ENCODE measurements at regions of chr9 and their contacts with region 1.

Region 1: DNA sequence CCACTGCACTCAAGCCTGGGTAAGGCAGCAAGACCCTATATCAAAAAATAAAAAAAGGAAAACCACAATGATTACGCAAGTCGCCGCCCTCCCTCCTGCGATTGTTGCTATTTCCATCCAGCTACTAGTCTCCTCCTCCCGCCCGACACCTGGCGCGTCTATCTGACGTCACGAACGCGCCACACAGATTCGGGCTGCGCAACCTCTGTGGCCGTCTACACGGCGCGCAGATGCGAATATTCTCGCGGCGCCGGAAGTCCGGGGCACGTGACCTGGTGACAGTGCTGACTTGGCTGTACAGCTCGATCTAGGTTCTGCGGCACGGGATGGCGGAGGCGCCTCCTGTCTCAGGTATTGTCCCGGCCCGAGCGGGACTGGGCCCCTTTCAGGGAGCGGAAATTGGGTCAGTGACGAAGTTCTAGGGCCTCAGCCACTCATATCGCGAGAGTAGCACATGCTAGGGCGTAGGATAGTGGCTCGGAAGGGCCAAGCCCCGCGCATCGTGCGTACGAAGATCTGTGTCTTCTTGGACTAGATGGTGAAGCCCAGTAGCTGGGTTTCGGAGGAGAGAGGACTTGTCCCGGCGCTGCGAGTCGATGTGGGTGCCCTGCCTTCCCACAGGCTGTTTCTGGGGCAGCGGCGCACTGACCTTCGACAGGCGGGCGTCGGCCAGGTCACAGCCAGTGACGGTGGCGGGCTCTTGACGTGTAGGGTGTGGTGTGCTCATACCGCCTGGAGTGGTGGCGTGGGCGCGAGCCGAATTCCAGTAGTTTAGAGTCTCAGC is at the start of gene NFX1:
- DNase-seq: peak; percentile 99
- H3K4me3 ChIP-seq: peak within 1 kb of the TSS; percentile 57 to 79 (median 78)
- H3K27ac ChIP-seq: peak within 1 kb of the TSS; percentile 92
- H3K4me1 ChIP-seq: peaks cover 13% of the 10 kb centered on the region
- H3K27me3 ChIP-seq: no peaks in the 10 kb centered on the region
- CTCF ChIP-seq: no peak
- POLR2A ChIP-seq: peak; percentile 95
- total RNA-seq, gene NFX1: 21.7 and 22.1 TPM in 2 replicates

Region 2: DNA sequence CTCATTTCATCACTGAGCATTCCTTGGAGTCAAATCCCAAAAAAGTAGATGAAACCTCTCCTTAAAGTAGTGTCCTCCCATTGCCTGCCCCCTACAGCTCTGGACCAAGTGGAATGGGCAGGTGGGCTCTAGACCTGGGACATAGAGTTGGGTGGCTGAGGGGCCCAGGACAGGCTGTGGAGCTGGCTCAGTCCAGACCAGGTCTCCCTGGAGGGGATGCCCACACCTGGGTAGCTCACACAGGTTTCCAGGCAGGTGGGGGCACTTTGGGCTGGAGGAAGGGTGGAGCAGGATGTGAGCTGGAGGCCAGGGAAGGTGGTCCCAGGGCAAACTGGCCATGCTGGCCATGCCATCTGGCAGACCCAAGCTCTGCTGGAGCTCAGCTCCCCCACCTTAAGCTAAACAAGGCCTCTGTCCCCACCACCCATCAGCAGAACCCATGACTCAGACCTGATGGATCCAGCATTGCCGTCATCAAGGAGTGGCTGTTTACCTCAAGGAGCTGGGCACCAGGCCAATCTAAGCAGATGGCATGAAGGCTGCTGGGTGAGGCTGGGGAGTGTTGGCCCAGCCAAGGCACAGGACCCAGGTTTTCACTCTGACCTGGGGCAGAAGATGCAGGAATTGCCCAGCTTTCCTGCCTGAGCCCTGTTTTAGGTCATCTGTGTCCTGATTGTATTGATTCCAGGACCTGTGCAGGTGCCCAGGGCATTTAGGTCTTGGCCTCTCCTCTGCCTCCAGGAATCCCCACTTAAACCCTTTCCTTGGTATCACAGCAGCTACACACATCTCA is 56.6 kb before region 1 on chr9:
- CTCF ChIA-PET with region 1: no interaction called
- POLR2A ChIA-PET with region 1: no interaction called
- dilution Hi-C with region 1: no loop called
- intact Hi-C with region 1: no loop called
- DNase-seq: peak; percentile 56
- H3K4me3 ChIP-seq: no peak overlapping the region
- H3K27ac ChIP-seq: no peak overlapping the region
- H3K4me1 ChIP-seq: no peaks in the 10 kb centered on the region
- H3K27me3 ChIP-seq: peaks cover 0 to 16% of the 10 kb centered on the region in 2 experiments
- CTCF ChIP-seq: no peak
- POLR2A ChIP-seq: no peak

Region 3: GRCh38 chr9:33264473-33265177 is 25.8 kb before region 1 on chr9 and contains the starts of genes BAG1 and CHMP5:
- CTCF ChIA-PET with region 1: no interaction called
- POLR2A ChIA-PET with region 1: interaction called, 5 read pairs
- dilution Hi-C with region 1: no loop called
- intact Hi-C with region 1: loop called (anchors 1 kb)
- DNase-seq: peak; percentile 100
- H3K4me3 ChIP-seq: peak within 1 kb of the TSS; percentile 37 to 96 (median 75)
- H3K27ac ChIP-seq: peak within 1 kb of the TSS; percentile 34
- H3K4me1 ChIP-seq: peaks cover 15% of the 10 kb centered on the region
- H3K27me3 ChIP-seq: no peaks in the 10 kb centered on the region
- CTCF ChIP-seq: peak; percentile 9 to 37
- POLR2A ChIP-seq: peak; percentile 85
- total RNA-seq, gene BAG1: 87.4 and 98.7 TPM in 2 replicates
- total RNA-seq, gene CHMP5: 54.5 and 55.8 TPM in 2 replicates

Region 4: GRCh38 chr9:33350310-33350709 is 59.9 kb after region 1 on chr9:
- CTCF ChIA-PET with region 1: interaction called, 5 read pairs
- POLR2A ChIA-PET with region 1: no interaction called
- dilution Hi-C with region 1: no loop called
- intact Hi-C with region 1: loop called (anchors 5 kb)
- DNase-seq: peak; percentile 43
- H3K4me3 ChIP-seq: no peak overlapping the region
- H3K27ac ChIP-seq: no peak overlapping the region
- H3K4me1 ChIP-seq: peaks cover 9% of the 10 kb centered on the region
- H3K27me3 ChIP-seq: no peaks in the 10 kb centered on the region
- CTCF ChIP-seq: no peak
- POLR2A ChIP-seq: no peak

Region 5: GRCh38 chr9:33404788-33405362 is 114.4 kb after region 1 on chr9:
- CTCF ChIA-PET with region 1: interaction called, 9 read pairs
- POLR2A ChIA-PET with region 1: no interaction called
- dilution Hi-C with region 1: no loop called
- intact Hi-C with region 1: loop called (anchors 5 kb)
- DNase-seq: no peak
- H3K4me3 ChIP-seq: no peak overlapping the region
- H3K27ac ChIP-seq: no peak overlapping the region
- H3K4me1 ChIP-seq: no peaks in the 10 kb centered on the region
- H3K27me3 ChIP-seq: no peaks in the 10 kb centered on the region
- CTCF ChIP-seq: no peak
- POLR2A ChIP-seq: no peak

Region 6: GRCh38 chr9:33466565-33467495 is 176.4 kb after region 1 on chr9:
- CTCF ChIA-PET with region 1: interaction called, 121 read pairs
- POLR2A ChIA-PET with region 1: interaction called, 9 read pairs
- dilution Hi-C with region 1: no loop called
- intact Hi-C with region 1: loop called (anchors 1 kb)
- DNase-seq: peak; percentile 38
- H3K4me3 ChIP-seq: no peak overlapping the region
- H3K27ac ChIP-seq: no peak overlapping the region
- H3K4me1 ChIP-seq: no peaks in the 10 kb centered on the region
- H3K27me3 ChIP-seq: no peaks in the 10 kb centered on the region
- CTCF ChIP-seq: peak; percentile 93 to 98
- POLR2A ChIP-seq: no peak

Region 7: GRCh38 chr9:33517373-33517772 is 226.9 kb after region 1 on chr9:
- CTCF ChIA-PET with region 1: interaction called, 8 read pairs
- POLR2A ChIA-PET with region 1: no interaction called
- dilution Hi-C with region 1: no loop called
- intact Hi-C with region 1: loop called (anchors 2 kb)
- DNase-seq: peak; percentile 53
- H3K4me3 ChIP-seq: no peak overlapping the region
- H3K27ac ChIP-seq: no peak overlapping the region
- H3K4me1 ChIP-seq: peaks cover 3% of the 10 kb centered on the region
- H3K27me3 ChIP-seq: no peaks in the 10 kb centered on the region
- CTCF ChIP-seq: peak; percentile 50
- POLR2A ChIP-seq: no peak